Vagina (tissue), 2 donors: ENCODE measurements at regions of chr5 and their contacts with region 1.

Region 1: GRCh38 chr5:75009556-75010345 is 42.6 kb downstream of the GCNT4 start:
- DNase-seq: no peak
- H3K4me3 ChIP-seq: no peak overlapping the region
- H3K27ac ChIP-seq: no peak overlapping the region
- H3K4me1 ChIP-seq: no peaks in the 10 kb centered on the region
- H3K27me3 ChIP-seq: no peaks in the 10 kb centered on the region
- CTCF ChIP-seq: no peak
- POLR2A ChIP-seq: no peak

Region 2: GRCh38 chr5:73764586-73764985 is 1245.2 kb before region 1 on chr5:
- intact Hi-C with region 1: no loop called
- DNase-seq: no peak
- H3K4me3 ChIP-seq: no peak overlapping the region
- H3K27ac ChIP-seq: no peak overlapping the region
- H3K4me1 ChIP-seq: no peaks in the 10 kb centered on the region
- H3K27me3 ChIP-seq: no peaks in the 10 kb centered on the region
- CTCF ChIP-seq: no peak
- POLR2A ChIP-seq: no peak

Region 3: GRCh38 chr5:75023368-75024159 is 13.8 kb after region 1 on chr5:
- intact Hi-C with region 1: loop called (anchors 1 kb)
- DNase-seq: no peak
- H3K4me3 ChIP-seq: no peak overlapping the region
- H3K27ac ChIP-seq: no peak overlapping the region
- H3K4me1 ChIP-seq: no peaks in the 10 kb centered on the region
- H3K27me3 ChIP-seq: no peaks in the 10 kb centered on the region
- CTCF ChIP-seq: no peak
- POLR2A ChIP-seq: no peak

Region 4: GRCh38 chr5:75044406-75044805 is 34.7 kb after region 1 on chr5:
- intact Hi-C with region 1: no loop called
- DNase-seq: no peak
- H3K4me3 ChIP-seq: no peak overlapping the region
- H3K27ac ChIP-seq: no peak overlapping the region
- H3K4me1 ChIP-seq: peaks cover 11% of the 10 kb centered on the region
- H3K27me3 ChIP-seq: no peaks in the 10 kb centered on the region
- CTCF ChIP-seq: no peak
- POLR2A ChIP-seq: no peak